ENCODE measurements at regions of chr17 and their contacts with region 1.

Region 1: GRCh38 chr17:29111816-29112499 is 68.2 kb downstream of the MYO18A start:
- DNase-seq: peak; percentile 83
- ATAC-seq: peak; percentile 45
- H3K4me3 Mint-ChIP-seq: no peak overlapping the region
- H3K27ac Mint-ChIP-seq: no peak overlapping the region
- H3K4me1 Mint-ChIP-seq: peaks cover 27% of the 10 kb centered on the region
- H3K27me3 Mint-ChIP-seq: no peaks in the 10 kb centered on the region
- CTCF ChIP-seq: peak; percentile 72

Region 2: DNA sequence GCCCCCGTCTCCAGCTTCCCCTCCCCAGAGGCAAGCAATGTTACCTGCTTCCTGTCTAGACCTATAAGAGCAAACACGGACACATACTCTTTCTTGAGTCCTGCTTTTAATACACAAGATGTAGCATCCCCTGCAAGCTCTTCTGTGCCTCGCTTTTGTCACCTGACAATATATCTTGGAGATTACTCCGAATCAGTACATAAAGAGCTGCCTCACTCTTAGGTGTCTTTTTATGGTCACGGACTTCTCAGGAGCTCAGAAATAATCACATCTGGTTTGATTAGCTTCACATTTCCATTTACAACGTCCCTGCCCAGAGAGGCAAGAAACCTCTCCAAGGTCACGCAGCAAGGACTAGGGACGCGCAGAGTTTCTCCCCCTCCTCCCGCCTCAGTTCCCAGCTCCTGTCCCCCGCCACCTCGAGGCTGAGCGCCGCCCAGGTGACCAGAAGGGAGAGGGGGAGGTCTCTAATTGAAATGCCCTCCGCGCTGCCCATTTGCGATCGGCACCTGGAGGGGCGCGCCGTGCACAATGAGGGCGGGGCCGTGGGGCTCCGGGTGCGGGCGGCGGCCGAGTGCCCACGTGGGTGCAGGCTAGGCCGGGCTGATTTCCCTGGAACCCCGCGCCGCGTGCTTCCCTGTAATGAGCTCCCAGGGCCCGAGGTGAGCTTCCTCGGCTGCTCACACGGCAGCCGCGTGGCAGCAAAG is 92.3 kb before region 1 on chr17:
- CTCF ChIA-PET with region 1: interaction called, 31 read pairs
- POLR2A ChIA-PET with region 1: no interaction called
- DNase-seq: peak; percentile 72
- ATAC-seq: peak; percentile 72
- H3K4me3 Mint-ChIP-seq: peak overlapping the region; percentile 62
- H3K27ac Mint-ChIP-seq: peak overlapping the region; percentile 69; the same call in 1 of the 2 replicates
- H3K4me1 Mint-ChIP-seq: peaks cover 67% of the 10 kb centered on the region
- H3K27me3 Mint-ChIP-seq: peaks cover 29% of the 10 kb centered on the region
- CTCF ChIP-seq: no peak

Region 3: GRCh38 chr17:29059281-29059680 is 52.7 kb before region 1 on chr17:
- CTCF ChIA-PET with region 1: interaction called, 53 read pairs
- POLR2A ChIA-PET with region 1: no interaction called
- DNase-seq: no peak
- ATAC-seq: no peak
- H3K4me3 Mint-ChIP-seq: no peak overlapping the region
- H3K27ac Mint-ChIP-seq: no peak overlapping the region
- H3K4me1 Mint-ChIP-seq: peaks cover 43% of the 10 kb centered on the region
- H3K27me3 Mint-ChIP-seq: no peaks in the 10 kb centered on the region
- CTCF ChIP-seq: no peak

Region 4: DNA sequence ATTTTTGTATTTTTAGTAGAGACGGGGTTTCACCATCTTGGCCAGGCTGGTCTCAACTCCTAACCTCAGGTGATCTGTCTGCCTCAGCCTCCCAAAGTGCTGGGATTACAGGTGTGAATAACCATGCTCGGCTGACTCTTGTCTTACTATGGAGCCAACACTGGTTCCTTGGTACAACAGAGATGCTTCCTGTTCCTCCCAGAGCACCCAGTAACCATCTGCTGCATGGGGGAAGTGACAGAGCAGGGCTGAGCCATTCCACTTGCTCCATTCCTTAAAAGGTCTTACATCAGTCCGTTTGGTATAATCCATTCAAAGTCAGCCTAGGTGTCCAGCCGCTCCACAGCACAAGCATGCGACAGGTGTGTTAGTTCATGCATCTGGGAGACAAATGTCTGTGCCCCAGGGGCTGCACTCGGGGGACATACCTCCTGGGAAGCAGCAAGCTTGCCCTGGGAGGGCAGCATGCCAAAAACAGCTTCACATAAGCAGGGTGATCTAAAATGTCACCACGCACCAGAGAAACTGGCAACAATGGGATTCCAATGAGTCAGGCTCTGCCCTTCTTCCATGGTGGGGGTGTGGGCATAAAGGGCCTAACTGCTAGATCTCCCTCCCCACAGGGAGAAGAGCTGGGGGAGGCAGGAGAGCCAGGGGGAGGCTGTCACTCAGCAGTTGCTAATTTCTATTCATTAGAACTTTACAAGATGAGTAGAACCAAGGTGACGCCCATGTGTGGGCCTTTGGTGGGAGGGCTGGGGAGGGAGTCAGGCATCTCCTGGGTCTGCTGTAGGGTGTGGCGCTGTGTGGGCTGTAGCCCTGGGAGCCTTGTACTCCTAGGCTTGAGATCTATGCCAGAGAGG is 33.5 kb before region 1 on chr17:
- CTCF ChIA-PET with region 1: interaction called, 34 read pairs
- POLR2A ChIA-PET with region 1: no interaction called
- DNase-seq: no peak
- ATAC-seq: no peak
- H3K4me3 Mint-ChIP-seq: no peak overlapping the region
- H3K27ac Mint-ChIP-seq: no peak overlapping the region
- H3K4me1 Mint-ChIP-seq: peaks cover 30% of the 10 kb centered on the region
- H3K27me3 Mint-ChIP-seq: no peaks in the 10 kb centered on the region
- CTCF ChIP-seq: no peak

Region 5: GRCh38 chr17:29124117-29124924 is 12.4 kb after region 1 on chr17:
- CTCF ChIA-PET with region 1: interaction called, 116 read pairs
- POLR2A ChIA-PET with region 1: interaction called, 3 read pairs
- DNase-seq: peak; percentile 51
- ATAC-seq: peak; percentile 87
- H3K4me3 Mint-ChIP-seq: no peak overlapping the region
- H3K27ac Mint-ChIP-seq: no peak overlapping the region
- H3K4me1 Mint-ChIP-seq: peaks cover 3% of the 10 kb centered on the region; the same call in 1 of the 2 replicates
- H3K27me3 Mint-ChIP-seq: no peaks in the 10 kb centered on the region
- CTCF ChIP-seq: no peak

Region 6: DNA sequence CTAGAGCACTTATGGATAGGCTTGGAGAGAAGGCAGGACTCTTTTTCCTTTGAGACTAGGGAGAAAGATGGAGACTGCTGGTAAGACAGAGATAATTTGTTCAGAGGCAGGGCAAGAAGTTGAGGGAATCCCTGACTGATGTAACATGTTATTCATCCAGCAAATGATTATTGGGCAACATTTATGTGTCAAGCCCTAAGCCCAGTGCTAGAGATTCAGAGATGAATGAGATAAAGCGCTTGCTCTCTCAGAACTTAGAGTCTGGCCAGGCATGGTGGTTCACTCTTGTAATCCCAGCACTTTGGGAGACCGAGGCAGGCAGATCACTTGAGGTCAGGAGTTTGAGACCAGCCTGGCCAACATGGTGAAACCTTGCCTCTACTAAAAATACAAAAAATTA is 229.8 kb after region 1 on chr17:
- CTCF ChIA-PET with region 1: no interaction called
- POLR2A ChIA-PET with region 1: no interaction called
- DNase-seq: no peak
- ATAC-seq: no peak
- H3K4me3 Mint-ChIP-seq: no peak overlapping the region
- H3K27ac Mint-ChIP-seq: no peak overlapping the region
- H3K4me1 Mint-ChIP-seq: no peaks in the 10 kb centered on the region
- H3K27me3 Mint-ChIP-seq: no peaks in the 10 kb centered on the region
- CTCF ChIP-seq: no peak

Measured in WTC11 (cell line).